ENCODE measurements at regions of chr5 and their contacts with region 1.

Region 1: GRCh38 chr5:176660860-176661641 is 13.8 kb downstream of the TSPAN17 start:
- DNase-seq: peak; percentile 80 to 92
- ATAC-seq: peak; percentile 71 to 78 (median 77)
- H3K4me3 ChIP-seq: no peak overlapping the region
- H3K4me3 Mint-ChIP-seq: peak overlapping the region; percentile 40
- H3K27ac ChIP-seq: no peak overlapping the region
- H3K27ac Mint-ChIP-seq: peak overlapping the region in 1 of 2 donors; percentile 27
- H3K4me1 ChIP-seq: peaks cover 32% of the 10 kb centered on the region
- H3K4me1 Mint-ChIP-seq: peaks cover 19 to 34% of the 10 kb centered on the region in 2 donors
- H3K27me3 ChIP-seq: no peaks in the 10 kb centered on the region
- H3K27me3 Mint-ChIP-seq: peaks cover 12 to 18% of the 10 kb centered on the region in 2 donors
- CTCF ChIP-seq: peak; percentile 92

Region 2: GRCh38 chr5:176744584-176744965 is 83.5 kb after region 1 on chr5:
- intact Hi-C with region 1: loop called (anchors 1 kb)
- DNase-seq: no peak
- ATAC-seq: no peak
- H3K4me3 ChIP-seq: no peak overlapping the region
- H3K4me3 Mint-ChIP-seq: no peak overlapping the region
- H3K27ac ChIP-seq: no peak overlapping the region
- H3K27ac Mint-ChIP-seq: no peak overlapping the region
- H3K4me1 ChIP-seq: peaks cover 34% of the 10 kb centered on the region
- H3K4me1 Mint-ChIP-seq: peaks cover 32 to 43% of the 10 kb centered on the region in 2 donors
- H3K27me3 ChIP-seq: peaks cover 46% of the 10 kb centered on the region
- H3K27me3 Mint-ChIP-seq: peaks cover 52 to 61% of the 10 kb centered on the region in 2 donors
- CTCF ChIP-seq: peak; percentile 16

Region 3: GRCh38 chr5:176817841-176818377 is 156.9 kb after region 1 on chr5:
- intact Hi-C with region 1: loop called (anchors 5 kb)
- DNase-seq: peak in 1 of 2 donors; percentile 44
- ATAC-seq: peak; percentile 5 to 43 (median 39)
- H3K4me3 ChIP-seq: no peak overlapping the region
- H3K4me3 Mint-ChIP-seq: peak overlapping the region; percentile 85
- H3K27ac ChIP-seq: no peak overlapping the region
- H3K27ac Mint-ChIP-seq: peak overlapping the region in 1 of 2 donors; percentile 48
- H3K4me1 ChIP-seq: peaks cover 19% of the 10 kb centered on the region
- H3K4me1 Mint-ChIP-seq: peaks cover 10 to 20% of the 10 kb centered on the region in 2 donors
- H3K27me3 ChIP-seq: peaks cover 26% of the 10 kb centered on the region
- H3K27me3 Mint-ChIP-seq: peaks cover 68 to 70% of the 10 kb centered on the region in 2 donors
- CTCF ChIP-seq: peak; percentile 22

Region 4: DNA sequence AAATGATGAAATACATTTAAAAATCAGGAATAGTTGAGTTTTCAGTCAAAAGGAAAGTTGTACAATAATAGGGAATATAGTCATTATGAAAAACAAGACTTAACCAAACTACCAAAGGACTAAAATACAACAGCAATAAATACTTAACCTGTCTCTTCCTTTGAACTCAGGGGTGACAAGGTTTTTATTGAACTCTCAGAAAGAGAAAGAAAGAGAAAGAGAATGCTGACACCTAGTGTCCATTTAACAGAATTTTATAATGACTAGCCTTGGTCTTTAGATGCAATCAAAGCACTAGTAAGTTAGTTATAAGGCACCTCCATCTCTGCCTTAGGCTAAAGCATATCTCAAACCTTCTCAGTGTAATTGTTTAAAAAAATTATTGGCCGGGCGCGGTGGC is 298.0 kb after region 1 on chr5:
- intact Hi-C with region 1: loop called (anchors 2 kb)
- DNase-seq: peak in 1 of 2 donors; percentile 64
- ATAC-seq: peak in 2 of 3 donors; percentile 55 to 64
- H3K4me3 ChIP-seq: no peak overlapping the region
- H3K4me3 Mint-ChIP-seq: no peak overlapping the region
- H3K27ac ChIP-seq: no peak overlapping the region
- H3K27ac Mint-ChIP-seq: no peak overlapping the region
- H3K4me1 ChIP-seq: no peaks in the 10 kb centered on the region
- H3K4me1 Mint-ChIP-seq: peaks cover 4 to 5% of the 10 kb centered on the region in 2 donors
- H3K27me3 ChIP-seq: no peaks in the 10 kb centered on the region
- H3K27me3 Mint-ChIP-seq: no peaks in the 10 kb centered on the region
- CTCF ChIP-seq: peak; percentile 64